Breast epithelium (tissue), 4 donors: ENCODE measurements at regions of chr22 and their contacts with region 1.

Region 1: GRCh38 chr22:40641269-40641668 is 4.8 kb upstream of the MRTFA start:
- DNase-seq: no peak
- H3K4me3 ChIP-seq: no peak overlapping the region
- H3K27ac ChIP-seq: no peak overlapping the region
- H3K4me1 ChIP-seq: peaks cover 0 to 3% of the 10 kb centered on the region in 2 donors
- H3K27me3 ChIP-seq: no peaks in the 10 kb centered on the region
- CTCF ChIP-seq: no peak
- POLR2A ChIP-seq: no peak

Region 2: GRCh38 chr22:40443732-40444131 is 197.5 kb before region 1 on chr22:
- intact Hi-C with region 1: loop called (anchors 5 kb)
- DNase-seq: no peak
- H3K4me3 ChIP-seq: no peak overlapping the region
- H3K27ac ChIP-seq: no peak overlapping the region
- H3K4me1 ChIP-seq: peaks cover 0 to 4% of the 10 kb centered on the region in 2 donors
- H3K27me3 ChIP-seq: no peaks in the 10 kb centered on the region
- CTCF ChIP-seq: no peak
- POLR2A ChIP-seq: no peak

Region 3: GRCh38 chr22:42039271-42039670 is 1398.0 kb after region 1 on chr22:
- intact Hi-C with region 1: no loop called
- DNase-seq: no peak
- H3K4me3 ChIP-seq: no peak overlapping the region
- H3K27ac ChIP-seq: no peak overlapping the region
- H3K4me1 ChIP-seq: no peaks in the 10 kb centered on the region
- H3K27me3 ChIP-seq: no peaks in the 10 kb centered on the region
- CTCF ChIP-seq: no peak
- POLR2A ChIP-seq: no peak